Activated CD4-positive, alpha-beta T cell treated with anti-CD3 and anti-CD28 coated beads, Interleukin-2, amount 10 ng/mL, durations not matched to agents 7 days and 5 days (primary cell): ENCODE measurements at regions of chr3 and their contacts with region 1.

Region 1: GRCh38 chr3:16842272-16843270 is 42.2 kb upstream of the PLCL2 start:
- DNase-seq: peak; percentile 87
- H3K4me3 Mint-ChIP-seq: peak overlapping the region; percentile 71
- H3K27ac Mint-ChIP-seq: peak overlapping the region; percentile 98
- H3K4me1 Mint-ChIP-seq: peaks cover 83% of the 10 kb centered on the region
- H3K27me3 Mint-ChIP-seq: no peaks in the 10 kb centered on the region

Region 2: GRCh38 chr3:16816048-16816780 is 26.4 kb before region 1 on chr3:
- CTCF ChIA-PET with region 1: no interaction called
- POLR2A ChIA-PET with region 1: no interaction called
- DNase-seq: no peak
- H3K4me3 Mint-ChIP-seq: no peak overlapping the region
- H3K27ac Mint-ChIP-seq: no peak overlapping the region
- H3K4me1 Mint-ChIP-seq: peaks cover 5% of the 10 kb centered on the region
- H3K27me3 Mint-ChIP-seq: peaks cover 10% of the 10 kb centered on the region

Region 3: DNA sequence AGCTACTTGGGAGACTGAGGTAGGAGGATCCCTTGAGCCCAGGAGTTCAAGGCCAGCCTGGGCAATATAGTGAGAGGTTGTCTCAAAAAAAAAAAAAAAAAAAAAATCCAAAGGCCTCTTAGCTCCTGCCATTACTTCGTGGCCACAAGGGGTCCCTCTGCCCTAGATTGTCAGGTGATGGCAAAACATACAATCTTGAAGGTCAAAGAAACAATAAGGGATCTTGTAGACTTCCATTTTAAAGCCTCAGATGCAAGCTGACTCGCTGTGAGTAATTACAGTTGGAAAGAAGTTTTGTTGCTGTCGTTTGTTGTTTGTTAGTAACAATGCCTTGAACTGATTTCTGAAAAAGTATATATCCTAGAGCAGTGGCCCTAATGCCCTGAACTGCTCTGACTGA is 13.8 kb before region 1 on chr3:
- CTCF ChIA-PET with region 1: interaction called, 13 read pairs
- POLR2A ChIA-PET with region 1: no interaction called
- DNase-seq: peak; percentile 63
- H3K4me3 Mint-ChIP-seq: no peak overlapping the region
- H3K27ac Mint-ChIP-seq: peak overlapping the region; percentile 9
- H3K4me1 Mint-ChIP-seq: peaks cover 28% of the 10 kb centered on the region
- H3K27me3 Mint-ChIP-seq: peaks cover 3% of the 10 kb centered on the region